ENCODE measurements at regions of chr9 and their contacts with region 1.

Region 1: DNA sequence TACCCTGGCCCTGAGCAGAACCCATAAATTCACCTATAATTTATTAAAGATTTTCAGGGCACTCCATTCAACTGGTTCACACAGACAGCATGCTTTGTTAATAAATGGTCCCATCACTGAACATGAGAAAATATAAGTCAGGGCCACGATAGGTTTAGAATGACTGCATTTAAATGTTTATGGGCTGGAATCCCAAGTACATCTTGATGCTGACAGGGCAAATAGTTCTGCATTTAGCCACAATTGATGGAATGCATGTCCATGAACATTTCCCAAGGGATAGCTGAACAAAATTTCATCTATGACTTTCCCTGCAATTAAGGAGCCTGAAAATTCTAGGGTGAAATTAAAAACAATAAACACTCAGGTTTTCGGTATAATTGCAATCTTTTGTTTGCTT is 124.5 kb downstream of the CAAP1 start:
- DNase-seq: no peak
- H3K27ac ChIP-seq: no peak overlapping the region
- CTCF ChIP-seq: no peak

Region 2: DNA sequence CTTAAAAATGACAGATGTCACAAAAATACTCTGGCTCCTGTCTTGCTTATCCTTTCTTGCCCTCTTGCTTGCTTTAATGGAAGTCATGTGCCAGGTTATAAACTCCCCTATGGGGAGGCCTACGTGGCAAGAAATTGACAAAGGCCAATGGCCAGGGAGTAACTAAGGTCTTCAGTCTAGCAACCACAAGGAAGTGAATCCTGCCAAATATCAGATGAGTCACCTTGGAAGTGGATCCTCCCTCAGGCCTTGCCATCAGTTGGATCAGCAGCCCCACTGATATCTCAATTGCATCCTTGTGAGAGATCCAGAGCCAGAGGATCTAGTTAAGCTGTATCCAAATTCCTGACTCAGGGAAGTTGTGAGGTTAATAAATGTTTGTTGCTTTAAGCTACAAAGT is 41.6 kb after region 1 on chr9:
- CTCF ChIA-PET with region 1: interaction called, 10 read pairs
- POLR2A ChIA-PET with region 1: no interaction called
- DNase-seq: peak; percentile 46
- H3K27ac ChIP-seq: no peak overlapping the region
- CTCF ChIP-seq: no peak

Region 3: GRCh38 chr9:26870292-26870691 is 102.1 kb after region 1 on chr9:
- CTCF ChIA-PET with region 1: no interaction called
- POLR2A ChIA-PET with region 1: no interaction called
- DNase-seq: no peak
- H3K27ac ChIP-seq: no peak overlapping the region
- CTCF ChIP-seq: no peak